ENCODE measurements at regions of chr2 and their contacts with region 1.

Region 1: GRCh38 chr2:40087434-40087833 is 308.4 kb upstream of the THUMPD2 start:
- DNase-seq: no peak
- ATAC-seq: no peak
- H3K4me3 ChIP-seq: no peak overlapping the region
- H3K4me3 Mint-ChIP-seq: no peak overlapping the region
- H3K27ac ChIP-seq: no peak overlapping the region
- H3K27ac Mint-ChIP-seq: no peak overlapping the region
- H3K4me1 ChIP-seq: no peaks in the 10 kb centered on the region
- H3K4me1 Mint-ChIP-seq: no peaks in the 10 kb centered on the region
- H3K27me3 ChIP-seq: peaks cover 0 to 6% of the 10 kb centered on the region in 2 experiments
- H3K27me3 Mint-ChIP-seq: peaks cover 0 to 4% of the 10 kb centered on the region in 2 donors

Region 2: DNA sequence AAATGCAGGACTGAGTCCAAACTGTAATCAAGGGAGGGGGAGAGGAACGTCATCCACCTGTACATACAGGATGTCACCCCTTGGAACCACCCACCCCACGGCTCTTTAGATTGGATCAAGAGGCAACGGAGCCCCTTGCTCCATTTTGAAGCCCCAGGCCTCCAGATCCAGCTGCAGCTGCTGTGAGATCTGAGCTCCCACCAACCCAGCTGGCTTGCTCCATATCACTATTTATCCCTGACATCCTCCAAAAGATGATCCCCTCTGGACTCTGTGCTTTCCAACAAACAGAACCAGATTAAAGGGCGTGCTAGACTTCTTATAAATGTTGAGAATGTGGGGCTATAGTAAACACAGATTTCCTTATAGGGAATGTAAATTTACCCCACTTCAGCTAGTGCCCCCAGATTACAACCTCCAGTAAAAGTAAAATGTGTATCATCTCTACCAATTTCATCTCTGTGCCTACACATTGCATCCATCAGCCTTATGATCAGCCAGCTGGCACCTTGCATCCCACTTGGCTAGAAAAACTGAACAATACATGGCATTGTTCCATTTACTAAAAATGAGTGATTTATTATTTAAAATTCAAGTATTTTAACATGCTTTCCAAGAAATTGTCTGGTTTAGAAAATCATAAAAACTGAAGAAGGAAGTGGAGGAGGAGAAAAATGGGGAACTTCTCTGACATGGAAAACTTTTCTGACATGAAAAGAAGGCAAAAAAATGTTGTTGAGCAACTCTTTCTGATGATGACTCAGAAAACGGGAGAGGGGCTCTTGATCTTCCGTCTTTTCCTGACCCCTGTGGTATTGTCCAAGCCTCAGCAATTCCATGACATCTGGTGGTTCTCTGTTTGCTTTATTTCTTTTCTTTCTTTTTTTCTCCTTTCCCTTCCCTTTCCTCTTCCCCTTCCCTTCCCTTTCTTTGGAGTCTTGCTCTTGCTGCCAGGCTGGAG is 45.7 kb before region 1 on chr2:
- CTCF ChIA-PET with region 1: interaction called in 1 of 2 experiments, 12 read pairs
- POLR2A ChIA-PET with region 1: no interaction called
- DNase-seq: no peak
- ATAC-seq: no peak
- H3K4me3 ChIP-seq: no peak overlapping the region
- H3K4me3 Mint-ChIP-seq: no peak overlapping the region
- H3K27ac ChIP-seq: no peak overlapping the region
- H3K27ac Mint-ChIP-seq: no peak overlapping the region
- H3K4me1 ChIP-seq: no peaks in the 10 kb centered on the region
- H3K4me1 Mint-ChIP-seq: no peaks in the 10 kb centered on the region
- H3K27me3 ChIP-seq: no peaks in the 10 kb centered on the region
- H3K27me3 Mint-ChIP-seq: peaks cover 0 to 3% of the 10 kb centered on the region in 2 donors

Measured in T-cell (primary cell).